ENCODE measurements at regions of chr6 and their contacts with region 1.

Region 1: GRCh38 chr6:27177485-27178406 is 69.8 kb upstream of the PRSS16 start:
- DNase-seq: peak; percentile 72
- H3K4me3 ChIP-seq: peak overlapping the region; percentile 98 to 100
- H3K27ac ChIP-seq: peak overlapping the region; percentile 81 to 85
- H3K4me1 ChIP-seq: peaks cover 0 to 3% of the 10 kb centered on the region in 2 experiments; a peak in 1 of 4 replicates
- H3K27me3 ChIP-seq: no peaks in the 10 kb centered on the region
- CTCF ChIP-seq: peak; percentile 63
- EP300 ChIP-seq: no peak
- RAD21 ChIP-seq: peak; percentile 47

Region 2: GRCh38 chr6:27114792-27115191 is 63.0 kb before region 1 on chr6:
- CTCF ChIA-PET with region 1: no interaction called
- POLR2A ChIA-PET with region 1: no interaction called
- DNase-seq: no peak
- H3K4me3 ChIP-seq: no peak overlapping the region
- H3K27ac ChIP-seq: no peak overlapping the region
- H3K4me1 ChIP-seq: no peaks in the 10 kb centered on the region
- H3K27me3 ChIP-seq: no peaks in the 10 kb centered on the region
- CTCF ChIP-seq: no peak
- EP300 ChIP-seq: no peak
- RAD21 ChIP-seq: no peak

Region 3: GRCh38 chr6:27157459-27158315 is 20.1 kb before region 1 on chr6:
- CTCF ChIA-PET with region 1: interaction called, 25 read pairs
- POLR2A ChIA-PET with region 1: no interaction called
- DNase-seq: no peak
- H3K4me3 ChIP-seq: peak overlapping the region; percentile 53 to 57
- H3K27ac ChIP-seq: no peak overlapping the region
- H3K4me1 ChIP-seq: no peaks in the 10 kb centered on the region; a peak in 1 of 4 replicates
- H3K27me3 ChIP-seq: no peaks in the 10 kb centered on the region
- CTCF ChIP-seq: peak; percentile 57
- EP300 ChIP-seq: no peak
- RAD21 ChIP-seq: peak; percentile 42; the same call in 1 of the 2 replicates

Region 4: GRCh38 chr6:27188885-27189418 is 11.2 kb after region 1 on chr6:
- CTCF ChIA-PET with region 1: interaction called, 13 read pairs
- POLR2A ChIA-PET with region 1: no interaction called
- DNase-seq: peak; percentile 60
- H3K4me3 ChIP-seq: peak overlapping the region; percentile 70 to 80
- H3K27ac ChIP-seq: peak overlapping the region in 1 of 2 experiments; percentile 76; a peak in 3 of 4 replicates
- H3K4me1 ChIP-seq: peaks cover 0 to 6% of the 10 kb centered on the region in 2 experiments; a peak in 1 of 4 replicates
- H3K27me3 ChIP-seq: no peaks in the 10 kb centered on the region
- CTCF ChIP-seq: peak; percentile 79
- EP300 ChIP-seq: no peak
- RAD21 ChIP-seq: peak; percentile 82

Measured in SK-N-SH (cell line).